ENCODE measurements at regions of chr7 and their contacts with region 1.

Region 1: GRCh38 chr7:43647673-43648472 is 65.0 kb downstream of the STK17A start:
- DNase-seq: no peak
- ATAC-seq: peak; percentile 4
- H3K4me3 Mint-ChIP-seq: peak overlapping the region; percentile 72
- H3K27ac Mint-ChIP-seq: peak overlapping the region; percentile 90
- H3K4me1 Mint-ChIP-seq: peaks cover 96% of the 10 kb centered on the region
- H3K27me3 Mint-ChIP-seq: no peaks in the 10 kb centered on the region
- CTCF ChIP-seq: no peak

Region 2: DNA sequence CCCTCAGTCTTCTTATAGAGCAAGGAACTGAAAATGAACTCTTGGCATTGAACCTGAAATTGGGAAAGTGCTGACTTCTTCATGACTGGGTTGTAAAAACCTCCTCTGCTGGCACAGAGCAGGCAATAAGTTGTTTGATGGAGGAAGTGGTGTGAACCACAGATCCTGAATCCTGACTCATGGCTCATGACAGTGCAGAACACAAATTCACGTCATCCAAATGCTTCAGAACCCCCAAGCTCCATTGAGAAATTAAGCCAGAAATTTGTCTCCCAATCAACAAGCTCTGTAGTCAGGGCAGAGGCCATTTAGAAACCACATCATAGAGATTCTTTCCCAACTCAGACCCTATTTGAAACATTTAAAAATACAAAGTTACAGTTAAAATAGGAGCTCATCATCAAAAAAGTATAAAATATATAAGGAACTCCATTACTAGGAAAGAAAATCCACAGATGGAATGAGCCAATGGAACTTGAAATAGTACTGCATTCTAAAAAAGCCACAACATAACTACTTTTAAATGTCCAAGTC is 75.3 kb before region 1 on chr7:
- CTCF ChIA-PET with region 1: no interaction called
- POLR2A ChIA-PET with region 1: no interaction called
- intact Hi-C with region 1: no loop called
- DNase-seq: no peak
- ATAC-seq: no peak
- H3K4me3 Mint-ChIP-seq: no peak overlapping the region
- H3K27ac Mint-ChIP-seq: no peak overlapping the region
- H3K4me1 Mint-ChIP-seq: peaks cover 2% of the 10 kb centered on the region
- H3K27me3 Mint-ChIP-seq: no peaks in the 10 kb centered on the region
- CTCF ChIP-seq: no peak

Region 3: GRCh38 chr7:43590862-43591550 is 56.9 kb before region 1 on chr7:
- CTCF ChIA-PET with region 1: interaction called, 5 read pairs
- POLR2A ChIA-PET with region 1: interaction called, 342 read pairs
- intact Hi-C with region 1: loop called (anchors 1 kb)
- DNase-seq: no peak
- ATAC-seq: peak; percentile 72
- H3K4me3 Mint-ChIP-seq: peak overlapping the region; percentile 50
- H3K27ac Mint-ChIP-seq: peak overlapping the region; percentile 81
- H3K4me1 Mint-ChIP-seq: peaks cover 89% of the 10 kb centered on the region
- H3K27me3 Mint-ChIP-seq: no peaks in the 10 kb centered on the region
- CTCF ChIP-seq: no peak

Region 4: GRCh38 chr7:43625453-43625852 is 22.4 kb before region 1 on chr7:
- CTCF ChIA-PET with region 1: interaction called, 5 read pairs
- POLR2A ChIA-PET with region 1: interaction called, 27 read pairs
- intact Hi-C with region 1: loop called (anchors 1 kb)
- DNase-seq: no peak
- ATAC-seq: peak; percentile 76
- H3K4me3 Mint-ChIP-seq: peak overlapping the region; percentile 51
- H3K27ac Mint-ChIP-seq: peak overlapping the region; percentile 85
- H3K4me1 Mint-ChIP-seq: peaks cover 84% of the 10 kb centered on the region
- H3K27me3 Mint-ChIP-seq: no peaks in the 10 kb centered on the region
- CTCF ChIP-seq: no peak

Region 5: GRCh38 chr7:43660141-43660540 is 12.3 kb after region 1 on chr7:
- CTCF ChIA-PET with region 1: no interaction called
- POLR2A ChIA-PET with region 1: interaction called, 12 read pairs
- intact Hi-C with region 1: loop called (anchors 1 kb)
- DNase-seq: no peak
- ATAC-seq: no peak
- H3K4me3 Mint-ChIP-seq: no peak overlapping the region
- H3K27ac Mint-ChIP-seq: peak overlapping the region; percentile 1
- H3K4me1 Mint-ChIP-seq: peaks cover 51% of the 10 kb centered on the region
- H3K27me3 Mint-ChIP-seq: no peaks in the 10 kb centered on the region
- CTCF ChIP-seq: no peak

Region 6: GRCh38 chr7:43674584-43675436 is 26.9 kb after region 1 on chr7:
- CTCF ChIA-PET with region 1: interaction called, 3 read pairs
- POLR2A ChIA-PET with region 1: interaction called, 17 read pairs
- intact Hi-C with region 1: loop called (anchors 1 kb)
- DNase-seq: no peak
- ATAC-seq: no peak
- H3K4me3 Mint-ChIP-seq: no peak overlapping the region
- H3K27ac Mint-ChIP-seq: peak overlapping the region; percentile 30
- H3K4me1 Mint-ChIP-seq: peaks cover 72% of the 10 kb centered on the region
- H3K27me3 Mint-ChIP-seq: no peaks in the 10 kb centered on the region
- CTCF ChIP-seq: no peak

Region 7: DNA sequence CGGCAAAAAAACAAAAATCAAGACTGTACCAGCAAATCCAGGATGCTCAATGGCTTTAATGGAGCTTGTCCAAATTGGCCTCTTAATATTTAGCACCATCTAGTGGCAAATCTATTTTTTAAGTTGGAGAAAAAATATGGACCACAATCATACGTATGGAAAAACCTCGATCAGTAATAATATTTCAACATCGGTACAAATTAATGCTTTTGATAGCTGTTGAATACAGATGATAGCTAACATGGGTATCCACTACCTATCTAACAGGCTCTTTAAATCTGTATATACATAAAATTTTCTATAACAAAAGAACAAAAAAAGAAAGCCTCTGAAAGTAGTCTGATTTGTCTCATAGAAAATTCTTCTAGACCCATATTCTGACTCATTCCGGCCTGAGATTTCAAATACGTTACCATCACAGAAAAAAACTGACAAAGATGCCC is 52.2 kb after region 1 on chr7:
- CTCF ChIA-PET with region 1: interaction called, 55 read pairs
- POLR2A ChIA-PET with region 1: interaction called, 57 read pairs
- intact Hi-C with region 1: loop called (anchors 1 kb)
- DNase-seq: no peak
- ATAC-seq: peak; percentile 84
- H3K4me3 Mint-ChIP-seq: peak overlapping the region; percentile 21
- H3K27ac Mint-ChIP-seq: peak overlapping the region; percentile 68
- H3K4me1 Mint-ChIP-seq: peaks cover 30% of the 10 kb centered on the region
- H3K27me3 Mint-ChIP-seq: no peaks in the 10 kb centered on the region
- CTCF ChIP-seq: peak; percentile 41

Measured in activated B cell treated with CpG ODN at 0.5 μM for 24 hours (primary cell).